Ascending aorta (tissue), 2 donors: ENCODE measurements at regions of chr17 and their contacts with region 1.

Region 1: DNA sequence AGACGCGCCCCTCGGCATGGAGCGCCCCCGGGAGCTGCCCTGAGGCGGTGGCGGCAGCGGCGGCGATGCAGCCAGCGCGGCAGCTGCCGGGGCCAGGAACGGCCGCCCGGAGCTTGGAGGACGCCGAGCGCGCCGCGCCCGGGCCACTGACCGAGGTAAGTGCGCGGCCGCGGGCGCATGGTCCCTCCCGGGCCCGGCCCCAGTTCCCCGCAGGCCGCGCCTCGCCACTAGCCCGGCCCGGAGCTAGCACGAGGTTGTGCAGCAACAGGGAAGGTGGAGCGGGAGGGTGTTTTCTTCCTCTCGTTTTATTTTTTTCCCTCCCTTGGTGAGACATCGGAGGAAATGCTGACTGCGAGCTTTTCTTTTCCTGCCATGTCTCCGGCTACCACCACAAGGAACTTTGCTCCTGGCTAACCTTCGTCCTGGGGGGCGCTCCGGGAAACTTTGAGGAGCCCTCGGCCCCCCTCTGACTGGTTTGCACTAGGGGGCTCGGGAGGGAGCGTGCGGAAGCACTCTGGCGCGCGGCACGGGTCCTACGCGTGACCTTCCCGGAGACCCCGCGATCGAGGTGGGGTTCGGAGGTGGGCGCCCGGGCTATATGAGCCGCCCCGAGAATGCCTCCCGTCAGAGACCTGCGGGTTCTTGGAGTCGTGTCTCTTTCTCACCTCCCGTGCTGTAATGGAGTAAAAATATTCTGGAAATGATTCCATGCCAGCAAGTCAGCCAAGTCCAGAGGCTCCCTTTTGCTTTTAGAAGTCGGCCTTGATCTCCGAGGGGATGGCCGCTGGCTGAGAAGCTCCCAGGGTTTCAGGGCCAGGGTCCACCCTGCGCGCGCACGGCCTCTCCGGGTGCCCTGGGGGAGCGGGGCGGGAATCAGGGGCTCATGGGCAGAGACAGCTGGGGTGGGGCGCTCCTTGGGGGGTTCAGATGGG is 868 bp downstream of the KCNJ12 start:
- DNase-seq: no peak
- H3K4me3 ChIP-seq: peak overlapping the region; percentile 52 to 67
- H3K27ac ChIP-seq: peak overlapping the region in 1 of 2 donors; percentile 36
- H3K4me1 ChIP-seq: peaks cover 4 to 6% of the 10 kb centered on the region in 2 donors
- H3K27me3 ChIP-seq: no peaks in the 10 kb centered on the region
- CTCF ChIP-seq: no peak

Region 2: GRCh38 chr17:21318439-21318838 is 58.6 kb before region 1 on chr17:
- intact Hi-C with region 1: loop called (anchors 10 kb)
- DNase-seq: peak in 1 of 2 donors; percentile 66
- H3K4me3 ChIP-seq: no peak overlapping the region
- H3K27ac ChIP-seq: no peak overlapping the region
- H3K4me1 ChIP-seq: peaks cover 0 to 2% of the 10 kb centered on the region in 2 donors
- H3K27me3 ChIP-seq: no peaks in the 10 kb centered on the region
- CTCF ChIP-seq: no peak

Region 3: GRCh38 chr17:21397341-21398190 is 20.5 kb after region 1 on chr17:
- intact Hi-C with region 1: no loop called
- DNase-seq: no peak
- H3K4me3 ChIP-seq: no peak overlapping the region
- H3K27ac ChIP-seq: no peak overlapping the region
- H3K4me1 ChIP-seq: peaks cover 0 to 2% of the 10 kb centered on the region in 2 donors
- H3K27me3 ChIP-seq: no peaks in the 10 kb centered on the region
- CTCF ChIP-seq: no peak